Activated CD4-positive, alpha-beta T cell treated with anti-CD3 and anti-CD28 coated beads for 36 hours (primary cell): ENCODE measurements at regions of chr13 and their contacts with region 1.

Region 1: DNA sequence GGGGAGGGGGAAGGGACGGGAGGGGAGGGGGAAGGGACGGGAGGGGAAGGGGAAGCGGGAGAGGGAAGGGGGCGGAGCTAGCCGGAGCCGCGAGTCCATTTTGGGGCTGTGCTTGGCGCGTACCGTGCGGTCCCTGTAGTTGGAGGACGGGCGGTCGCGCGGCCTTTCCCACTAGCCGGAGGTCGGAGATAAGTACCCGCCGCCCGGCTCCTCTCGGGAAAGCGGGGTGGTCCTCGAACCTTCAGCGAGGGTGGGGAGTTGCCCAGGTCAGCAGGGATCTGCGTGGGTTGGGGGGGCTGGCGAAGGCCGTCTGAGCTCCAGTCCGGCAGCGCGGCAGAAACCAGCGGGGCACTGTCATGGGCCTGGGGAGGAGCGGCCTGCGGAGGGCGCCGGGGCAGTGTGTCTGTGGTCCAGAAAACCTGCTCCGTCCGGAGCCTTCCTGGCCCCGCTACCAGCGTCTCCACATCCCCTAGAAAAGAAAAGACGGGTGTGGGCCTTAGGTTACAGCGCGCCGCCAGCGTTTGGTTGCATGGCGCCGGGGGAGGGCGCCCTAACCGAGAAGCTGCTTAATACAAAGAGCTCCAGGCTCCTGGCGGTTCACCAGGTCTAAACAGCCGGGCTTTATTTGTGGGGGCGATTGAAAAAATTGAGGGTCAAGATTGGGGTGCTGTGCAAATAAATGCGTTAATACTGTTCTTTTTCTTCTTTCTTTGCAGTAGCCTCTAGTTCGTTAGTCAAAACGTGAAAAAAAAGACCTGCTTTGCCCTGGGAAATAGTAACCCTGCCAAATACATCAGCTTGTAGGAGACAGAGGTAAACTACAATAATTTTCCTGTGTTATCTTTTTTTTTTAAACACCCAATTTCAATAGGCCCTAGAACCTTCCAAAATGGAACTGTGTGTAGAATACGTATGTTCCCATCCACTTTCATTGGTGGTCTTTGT is at the start of gene TRIM13:
- DNase-seq: peak; percentile 90
- ATAC-seq: peak; percentile 86
- H3K4me3 Mint-ChIP-seq: peak within 1 kb of the TSS; percentile 77
- H3K27ac Mint-ChIP-seq: peak within 1 kb of the TSS; percentile 76
- H3K4me1 Mint-ChIP-seq: peaks cover 47% of the 10 kb centered on the region
- H3K27me3 Mint-ChIP-seq: no peaks in the 10 kb centered on the region
- total RNA-seq, gene TRIM13: 10.6 to 12.9 TPM

Region 2: DNA sequence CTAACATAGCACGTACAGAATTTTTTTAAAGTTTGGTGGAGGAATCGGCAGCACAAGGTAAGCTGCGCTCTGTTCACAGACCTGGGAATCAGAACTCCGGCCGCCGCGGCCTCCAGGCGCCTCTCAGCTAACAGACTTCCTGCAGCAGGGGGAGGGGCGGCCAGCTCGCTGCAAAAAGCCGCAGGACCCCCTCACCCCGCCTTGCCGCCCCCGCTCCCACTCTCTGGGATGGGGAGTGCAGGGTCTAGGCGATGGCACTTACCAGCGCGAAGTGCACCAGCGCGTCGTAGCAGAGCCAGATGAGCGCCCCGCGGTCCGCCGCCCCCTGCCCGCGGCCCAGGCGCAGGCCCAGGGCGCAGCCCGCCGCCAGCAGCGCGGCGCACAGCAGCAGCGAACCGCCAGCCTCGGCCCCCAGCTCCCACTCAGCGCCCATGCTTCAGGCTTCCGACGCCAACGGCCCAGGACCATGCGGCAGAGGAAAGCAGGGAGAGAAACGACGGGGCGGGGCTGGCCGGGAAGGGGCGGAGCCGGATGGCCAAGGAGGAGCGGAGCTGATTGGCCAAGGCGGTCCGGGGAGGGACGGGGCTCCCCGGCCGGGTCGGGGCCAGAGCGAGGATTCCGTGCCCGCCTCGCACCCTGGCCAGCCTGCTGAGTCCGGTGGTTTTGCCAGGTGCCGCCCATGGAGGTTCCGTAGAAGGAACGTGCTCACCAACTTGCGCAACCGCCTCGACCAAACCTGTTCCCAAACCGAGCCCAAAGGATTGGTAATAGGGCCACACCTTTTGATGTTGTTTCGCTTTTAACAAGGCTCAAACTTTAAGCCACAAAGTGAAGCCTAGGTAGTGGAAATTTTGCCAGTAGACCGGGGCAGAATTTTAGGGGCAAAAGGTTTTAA is 306.0 kb before region 1 on chr13 and contains the start of gene EBPL:
- CTCF ChIA-PET with region 1: no interaction called
- POLR2A ChIA-PET with region 1: no interaction called
- intact Hi-C with region 1: loop called in 1 of 2 experiments (anchors 2 kb)
- DNase-seq: peak; percentile 95
- ATAC-seq: peak; percentile 98
- H3K4me3 Mint-ChIP-seq: peak within 1 kb of the TSS; percentile 87
- H3K27ac Mint-ChIP-seq: peak within 1 kb of the TSS; percentile 84
- H3K4me1 Mint-ChIP-seq: peaks cover 30% of the 10 kb centered on the region
- H3K27me3 Mint-ChIP-seq: no peaks in the 10 kb centered on the region
- total RNA-seq, gene EBPL: 40.7 to 55.8 TPM

Region 3: GRCh38 chr13:49936085-49936940 is 60.9 kb before region 1 on chr13 and contains the start of gene SPRYD7:
- CTCF ChIA-PET with region 1: interaction called, 10 read pairs
- POLR2A ChIA-PET with region 1: interaction called, 5 read pairs
- intact Hi-C with region 1: loop called (anchors 1 kb)
- DNase-seq: peak; percentile 98
- ATAC-seq: peak; percentile 98
- H3K4me3 Mint-ChIP-seq: peak within 1 kb of the TSS; percentile 84
- H3K27ac Mint-ChIP-seq: peak within 1 kb of the TSS; percentile 73
- H3K4me1 Mint-ChIP-seq: peaks cover 11% of the 10 kb centered on the region
- H3K27me3 Mint-ChIP-seq: no peaks in the 10 kb centered on the region
- total RNA-seq, gene SPRYD7: 4.8 to 4.9 TPM

Region 4: DNA sequence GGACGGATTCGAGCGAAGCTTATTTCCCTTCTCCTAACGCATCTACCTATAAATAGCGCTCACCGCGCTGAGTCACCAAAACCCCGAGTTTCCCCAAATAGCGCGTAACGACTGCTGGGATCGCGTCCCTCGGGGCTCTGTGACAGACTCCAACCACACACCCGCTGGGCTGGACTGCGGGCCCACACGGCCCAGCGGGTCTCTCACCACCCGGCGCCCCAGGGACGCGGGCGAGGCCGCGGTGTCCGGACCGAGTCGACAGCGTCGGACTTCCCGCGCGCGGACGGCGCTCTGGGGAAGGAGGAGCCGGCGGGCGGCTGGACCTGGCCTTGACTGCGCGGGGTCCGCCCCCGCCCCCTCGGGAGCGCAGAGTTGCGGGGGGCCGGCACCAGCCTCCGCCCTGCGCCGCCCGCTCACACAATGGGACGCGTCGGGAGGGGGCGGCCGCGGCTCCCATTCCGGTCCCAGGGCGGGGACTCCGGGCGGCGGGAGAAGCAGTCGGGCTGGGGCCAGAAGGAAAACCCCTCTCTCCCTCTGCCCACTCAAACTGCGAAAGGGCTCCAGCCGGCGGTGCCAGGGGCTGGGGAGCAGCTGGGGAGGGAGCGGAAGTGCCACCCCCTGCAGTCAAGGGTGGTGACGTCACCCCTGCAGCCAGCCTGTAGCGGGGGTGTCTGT is 126.8 kb after region 1 on chr13:
- CTCF ChIA-PET with region 1: interaction called, 12 read pairs
- POLR2A ChIA-PET with region 1: interaction called, 12 read pairs
- intact Hi-C with region 1: loop called (anchors 1 to 2 kb)
- DNase-seq: peak; percentile 86
- ATAC-seq: peak; percentile 68
- H3K4me3 Mint-ChIP-seq: peak overlapping the region; percentile 72
- H3K27ac Mint-ChIP-seq: peak overlapping the region; percentile 89
- H3K4me1 Mint-ChIP-seq: peaks cover 49% of the 10 kb centered on the region
- H3K27me3 Mint-ChIP-seq: peaks cover 13% of the 10 kb centered on the region

Region 5: GRCh38 chr13:50236898-50237318 is 239.7 kb after region 1 on chr13:
- CTCF ChIA-PET with region 1: no interaction called
- POLR2A ChIA-PET with region 1: no interaction called
- intact Hi-C with region 1: loop called (anchors 5 kb)
- DNase-seq: peak; percentile 60
- ATAC-seq: peak; percentile 92
- H3K4me3 Mint-ChIP-seq: peak overlapping the region; percentile 47
- H3K27ac Mint-ChIP-seq: peak overlapping the region; percentile 74
- H3K4me1 Mint-ChIP-seq: peaks cover 47% of the 10 kb centered on the region
- H3K27me3 Mint-ChIP-seq: peaks cover 18% of the 10 kb centered on the region

Region 6: DNA sequence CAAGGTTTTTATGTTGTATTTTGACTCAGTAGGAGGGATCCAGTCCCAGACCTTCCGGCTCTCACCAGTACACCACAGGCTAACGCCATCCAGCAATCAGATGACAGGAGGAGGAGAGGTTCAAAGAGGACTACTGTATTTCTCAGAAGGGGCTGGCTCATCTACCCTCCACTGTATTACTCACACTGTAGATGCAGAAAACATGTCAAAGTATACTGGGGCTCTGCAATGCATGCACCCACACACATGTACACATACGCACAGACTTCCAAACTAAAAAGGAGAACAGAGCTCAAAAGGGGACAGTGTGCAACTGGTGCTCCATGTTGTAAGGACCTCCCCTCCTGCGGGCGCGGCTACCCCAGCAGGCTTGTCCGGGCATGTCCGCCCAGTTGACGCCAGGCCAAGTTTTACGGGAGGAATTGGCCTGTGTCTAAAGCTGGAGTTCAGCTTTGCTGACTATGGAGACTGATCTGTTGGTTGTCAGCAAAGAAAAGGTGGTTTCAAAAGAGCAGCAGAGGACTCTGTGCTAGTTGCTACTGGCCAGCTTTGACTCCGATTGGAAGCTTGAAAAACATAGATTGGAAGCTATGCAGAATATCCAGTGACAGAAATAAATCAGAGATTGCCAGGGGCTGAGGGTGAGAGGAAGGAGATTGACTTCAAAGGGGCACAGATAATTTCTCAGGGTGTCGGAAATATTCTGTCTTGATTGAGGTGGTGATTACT is 532.1 kb after region 1 on chr13:
- CTCF ChIA-PET with region 1: no interaction called
- POLR2A ChIA-PET with region 1: no interaction called
- intact Hi-C with region 1: loop called in 1 of 2 experiments (anchors 5 kb)
- DNase-seq: peak; percentile 46
- ATAC-seq: peak; percentile 94
- H3K4me3 Mint-ChIP-seq: no peak overlapping the region
- H3K27ac Mint-ChIP-seq: no peak overlapping the region
- H3K4me1 Mint-ChIP-seq: peaks cover 30% of the 10 kb centered on the region
- H3K27me3 Mint-ChIP-seq: no peaks in the 10 kb centered on the region

Region 7: GRCh38 chr13:51222037-51222685 is 1224.9 kb after region 1 on chr13 and contains the start of gene FAM124A:
- CTCF ChIA-PET with region 1: no interaction called
- POLR2A ChIA-PET with region 1: no interaction called
- intact Hi-C with region 1: no loop called
- DNase-seq: peak; percentile 72
- ATAC-seq: peak; percentile 93
- H3K4me3 Mint-ChIP-seq: peak within 1 kb of the TSS; percentile 71
- H3K27ac Mint-ChIP-seq: no peak within 1 kb of the TSS
- H3K4me1 Mint-ChIP-seq: no peaks in the 10 kb centered on the region
- H3K27me3 Mint-ChIP-seq: peaks cover 43% of the 10 kb centered on the region
- total RNA-seq, gene FAM124A: 0.16 to 0.25 TPM